Uterus (tissue), 4 donors: ENCODE measurements at regions of chr14 and their contacts with region 1.

Region 1: DNA sequence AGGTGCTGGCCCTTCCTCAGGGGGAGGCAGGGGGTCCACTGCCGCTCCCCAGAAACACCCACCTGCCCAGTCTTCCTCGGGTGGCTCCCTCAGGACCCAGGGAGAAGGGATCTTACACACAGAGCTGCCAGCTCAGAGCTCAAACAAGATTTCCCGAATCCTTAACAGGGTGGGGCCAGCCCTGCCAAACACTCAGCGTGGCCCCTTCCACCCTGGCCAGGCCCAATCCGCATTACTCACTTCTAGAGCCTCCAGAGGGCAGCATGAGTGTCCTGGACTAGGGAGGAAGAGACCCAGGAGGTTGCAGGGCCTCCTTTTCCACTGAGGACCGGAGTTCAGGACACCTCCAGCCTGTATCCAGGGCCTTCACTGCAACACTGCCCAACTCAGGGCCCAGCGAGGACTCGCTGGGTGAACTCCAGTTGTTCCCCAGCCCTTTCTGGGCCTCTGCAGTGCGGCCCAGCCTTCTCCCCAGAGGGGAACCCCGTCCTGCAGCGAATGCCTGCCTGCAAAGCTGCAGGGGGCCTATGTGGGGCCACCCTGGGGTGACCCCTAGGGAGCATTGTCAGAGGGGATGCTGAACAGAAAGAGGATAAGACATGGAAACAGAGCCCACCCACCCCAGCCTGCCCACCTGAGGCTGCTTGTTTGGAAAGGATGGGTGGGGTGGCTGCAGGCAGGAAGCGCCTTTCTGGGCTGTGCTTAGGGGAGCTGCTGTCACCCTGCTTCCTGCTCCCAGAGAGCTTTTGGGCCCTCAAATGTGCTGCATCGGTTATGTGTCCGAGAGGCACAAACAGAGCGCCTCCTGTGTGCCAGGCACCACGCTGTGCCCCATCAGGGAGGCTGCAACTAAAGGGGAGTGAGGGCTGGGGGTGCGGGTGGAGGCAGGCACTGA is 43.8 kb downstream of the CCNK start:
- DNase-seq: no peak
- H3K4me3 ChIP-seq: no peak overlapping the region
- H3K27ac ChIP-seq: peak overlapping the region; percentile 82 to 84
- H3K4me1 ChIP-seq: peaks cover 0 to 20% of the 10 kb centered on the region in 2 donors
- H3K27me3 ChIP-seq: no peaks in the 10 kb centered on the region
- CTCF ChIP-seq: peak in 3 of 4 experiments; percentile 14 to 42 (median 42)
- POLR2A ChIP-seq: no peak

Region 2: DNA sequence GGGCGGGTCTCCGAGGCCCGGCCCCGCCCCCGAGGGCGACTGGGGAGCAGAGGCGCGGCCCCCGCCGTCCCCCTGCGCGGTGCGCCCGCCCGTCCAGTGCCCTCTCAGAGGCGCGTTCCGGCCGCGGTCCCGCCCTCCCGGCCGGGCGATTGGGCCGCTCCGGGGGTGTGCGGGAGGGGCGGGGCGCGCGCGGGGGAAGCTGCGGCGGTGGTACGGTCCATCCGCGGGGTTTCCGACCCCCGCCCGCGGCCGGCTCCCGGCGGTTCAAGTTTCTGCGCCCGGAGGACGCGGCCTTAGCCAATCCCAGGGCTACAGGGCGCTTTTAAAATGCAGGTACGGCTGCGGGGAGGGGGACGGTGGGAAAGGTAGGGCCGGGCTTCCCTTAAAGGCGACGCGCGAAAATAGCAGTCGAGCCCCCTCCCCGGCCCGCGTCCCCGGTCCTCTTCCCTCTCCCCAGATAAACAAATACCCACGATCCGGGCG is 79.3 kb after region 1 on chr14:
- intact Hi-C with region 1: loop called (anchors 10 kb)
- DNase-seq: peak; percentile 92 to 96
- H3K4me3 ChIP-seq: peak overlapping the region; percentile 62 to 89
- H3K27ac ChIP-seq: peak overlapping the region; percentile 89 to 92
- H3K4me1 ChIP-seq: peaks cover 0 to 30% of the 10 kb centered on the region in 2 donors
- H3K27me3 ChIP-seq: no peaks in the 10 kb centered on the region
- CTCF ChIP-seq: no peak
- POLR2A ChIP-seq: peak in 1 of 2 donors; percentile 60

Region 3: GRCh38 chr14:99636487-99636886 is 111.4 kb after region 1 on chr14:
- intact Hi-C with region 1: no loop called
- DNase-seq: no peak
- H3K4me3 ChIP-seq: no peak overlapping the region
- H3K27ac ChIP-seq: no peak overlapping the region
- H3K4me1 ChIP-seq: no peaks in the 10 kb centered on the region
- H3K27me3 ChIP-seq: no peaks in the 10 kb centered on the region
- CTCF ChIP-seq: no peak
- POLR2A ChIP-seq: no peak